Activated CD8-positive, alpha-beta memory T cell treated with anti-CD3 and anti-CD28 coated beads, Interleukin-2, amount 10 ng/mL, durations not matched to agents 7 days and 5 days (primary cell): ENCODE measurements at regions of chr17 and their contacts with region 1.

Region 1: GRCh38 chr17:1716076-1716995 is 6.2 kb upstream of the TLCD2 start:
- DNase-seq: peak; percentile 100
- ATAC-seq: peak; percentile 85
- H3K4me3 Mint-ChIP-seq: peak overlapping the region; percentile 89
- H3K27ac Mint-ChIP-seq: peak overlapping the region; percentile 99
- H3K4me1 Mint-ChIP-seq: peaks cover 23% of the 10 kb centered on the region
- H3K27me3 Mint-ChIP-seq: peaks cover 7% of the 10 kb centered on the region

Region 2: GRCh38 chr17:1566545-1567199 is 149.7 kb before region 1 on chr17:
- CTCF ChIA-PET with region 1: no interaction called
- DNase-seq: peak; percentile 50
- ATAC-seq: no peak
- H3K4me3 Mint-ChIP-seq: peak overlapping the region; percentile 72
- H3K27ac Mint-ChIP-seq: peak overlapping the region; percentile 86
- H3K4me1 Mint-ChIP-seq: peaks cover 26% of the 10 kb centered on the region
- H3K27me3 Mint-ChIP-seq: no peaks in the 10 kb centered on the region

Region 3: DNA sequence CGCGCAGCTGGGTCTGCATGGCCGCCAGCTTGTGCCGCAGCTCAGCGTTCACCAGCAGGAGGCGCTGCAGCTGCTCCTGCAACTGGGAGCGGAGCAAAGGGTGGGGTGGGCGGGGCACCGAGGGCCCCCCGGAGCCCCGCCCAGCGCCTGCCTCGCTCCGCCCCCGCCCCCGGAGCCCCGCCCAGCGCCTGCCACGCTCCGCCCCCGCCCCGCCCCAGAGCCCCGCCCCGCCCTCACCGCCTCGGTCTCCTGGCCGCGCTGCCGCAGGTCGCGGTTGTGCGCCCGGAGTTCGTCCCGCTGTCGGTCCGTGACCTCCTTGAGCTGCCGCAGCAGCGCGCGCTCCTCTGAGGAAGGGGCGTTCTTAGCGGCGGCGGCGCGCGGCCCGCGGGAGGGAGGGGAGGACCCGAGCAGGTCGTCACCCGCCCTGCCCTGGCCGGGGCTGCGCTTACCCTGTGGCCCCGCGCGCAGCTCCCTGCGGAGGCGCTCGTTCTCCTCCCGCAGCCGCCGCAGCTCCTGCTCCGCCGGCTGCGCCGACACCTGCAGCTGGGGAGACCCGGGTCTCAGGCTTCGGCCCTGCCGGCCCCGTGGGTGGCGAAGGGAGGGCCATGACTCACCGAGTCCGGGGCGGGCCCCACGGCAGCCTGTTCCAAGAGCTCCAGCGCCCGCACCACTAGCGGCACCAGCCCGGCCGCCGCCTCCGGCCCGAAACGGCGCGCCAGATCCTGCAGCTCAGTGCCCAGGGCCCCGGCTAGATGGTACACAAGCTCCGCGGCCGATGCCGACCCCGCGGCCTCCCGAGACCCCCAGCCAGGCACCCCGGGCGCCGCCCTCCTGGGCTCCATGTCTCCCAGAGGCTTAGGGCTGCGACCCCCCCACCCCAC is 67.1 kb before region 1 on chr17:
- CTCF ChIA-PET with region 1: interaction called, 21 read pairs
- DNase-seq: peak; percentile 96
- ATAC-seq: peak; percentile 81
- H3K4me3 Mint-ChIP-seq: peak overlapping the region; percentile 44
- H3K27ac Mint-ChIP-seq: peak overlapping the region; percentile 28
- H3K4me1 Mint-ChIP-seq: peaks cover 19% of the 10 kb centered on the region
- H3K27me3 Mint-ChIP-seq: no peaks in the 10 kb centered on the region

Region 4: DNA sequence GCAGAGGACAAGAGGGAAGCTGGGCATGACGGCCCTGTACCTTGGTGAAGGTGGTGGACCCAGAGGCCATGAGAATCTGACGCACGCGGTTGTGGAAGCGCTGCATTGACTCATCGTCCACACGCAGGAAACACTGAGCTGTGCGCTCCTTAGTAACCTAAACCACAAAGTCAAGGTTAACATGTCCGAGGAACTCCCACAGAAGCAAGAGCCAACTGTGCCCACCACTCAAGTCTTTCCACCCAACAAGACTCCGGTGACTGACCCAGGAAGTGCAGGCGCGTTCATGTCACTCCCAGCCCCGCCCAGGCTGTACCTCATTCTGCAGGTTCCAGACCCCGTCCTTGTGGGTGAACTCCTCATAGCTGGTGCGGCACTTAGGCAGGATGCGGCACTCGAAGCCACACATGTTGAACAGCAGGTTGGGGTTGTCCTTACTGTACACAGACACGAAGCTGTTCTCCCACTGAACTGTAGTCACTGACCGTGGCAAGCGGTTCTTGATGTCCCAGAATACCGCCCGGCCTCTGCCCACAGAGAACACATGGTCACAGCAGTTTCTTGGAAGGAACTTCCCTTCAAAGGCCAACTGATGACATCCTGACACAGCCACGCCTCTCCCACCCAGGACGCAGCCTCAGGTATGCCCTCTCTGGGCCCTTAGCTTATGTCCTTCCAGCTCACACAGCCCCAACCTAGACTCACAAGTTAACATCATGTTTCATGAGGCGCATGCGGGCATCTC is 43.1 kb before region 1 on chr17:
- CTCF ChIA-PET with region 1: interaction called, 14 read pairs
- DNase-seq: peak; percentile 58
- ATAC-seq: peak; percentile 47
- H3K4me3 Mint-ChIP-seq: no peak overlapping the region
- H3K27ac Mint-ChIP-seq: peak overlapping the region; percentile 32
- H3K4me1 Mint-ChIP-seq: peaks cover 19% of the 10 kb centered on the region
- H3K27me3 Mint-ChIP-seq: no peaks in the 10 kb centered on the region

Region 5: DNA sequence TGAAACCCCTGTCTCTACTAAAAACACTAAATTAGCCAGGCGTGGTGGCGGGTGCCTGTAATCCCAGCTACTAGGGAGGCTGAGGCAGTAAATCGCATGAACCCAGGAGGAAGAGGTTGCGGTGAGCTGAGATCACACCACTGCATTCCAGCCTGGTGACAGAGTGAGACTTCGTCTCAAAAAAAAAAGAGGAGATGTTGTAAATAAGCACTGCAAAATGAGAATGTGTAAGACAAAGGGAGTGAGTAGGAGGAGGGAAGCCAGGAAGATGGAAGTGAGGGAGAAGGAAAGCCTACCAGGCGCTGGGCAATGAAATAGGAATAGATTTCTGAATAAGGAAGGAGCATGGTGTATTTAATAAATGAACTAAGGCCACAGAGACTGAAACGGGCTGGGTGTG is 23.0 kb before region 1 on chr17:
- CTCF ChIA-PET with region 1: no interaction called
- DNase-seq: no peak
- ATAC-seq: no peak
- H3K4me3 Mint-ChIP-seq: no peak overlapping the region
- H3K27ac Mint-ChIP-seq: no peak overlapping the region
- H3K4me1 Mint-ChIP-seq: no peaks in the 10 kb centered on the region
- H3K27me3 Mint-ChIP-seq: peaks cover 9% of the 10 kb centered on the region

Region 6: GRCh38 chr17:1764284-1764683 is 47.9 kb after region 1 on chr17:
- CTCF ChIA-PET with region 1: interaction called, 13 read pairs
- DNase-seq: peak; percentile 86
- ATAC-seq: peak; percentile 92
- H3K4me3 Mint-ChIP-seq: peak overlapping the region; percentile 3
- H3K27ac Mint-ChIP-seq: peak overlapping the region; percentile 79
- H3K4me1 Mint-ChIP-seq: peaks cover 27% of the 10 kb centered on the region
- H3K27me3 Mint-ChIP-seq: no peaks in the 10 kb centered on the region

Region 7: DNA sequence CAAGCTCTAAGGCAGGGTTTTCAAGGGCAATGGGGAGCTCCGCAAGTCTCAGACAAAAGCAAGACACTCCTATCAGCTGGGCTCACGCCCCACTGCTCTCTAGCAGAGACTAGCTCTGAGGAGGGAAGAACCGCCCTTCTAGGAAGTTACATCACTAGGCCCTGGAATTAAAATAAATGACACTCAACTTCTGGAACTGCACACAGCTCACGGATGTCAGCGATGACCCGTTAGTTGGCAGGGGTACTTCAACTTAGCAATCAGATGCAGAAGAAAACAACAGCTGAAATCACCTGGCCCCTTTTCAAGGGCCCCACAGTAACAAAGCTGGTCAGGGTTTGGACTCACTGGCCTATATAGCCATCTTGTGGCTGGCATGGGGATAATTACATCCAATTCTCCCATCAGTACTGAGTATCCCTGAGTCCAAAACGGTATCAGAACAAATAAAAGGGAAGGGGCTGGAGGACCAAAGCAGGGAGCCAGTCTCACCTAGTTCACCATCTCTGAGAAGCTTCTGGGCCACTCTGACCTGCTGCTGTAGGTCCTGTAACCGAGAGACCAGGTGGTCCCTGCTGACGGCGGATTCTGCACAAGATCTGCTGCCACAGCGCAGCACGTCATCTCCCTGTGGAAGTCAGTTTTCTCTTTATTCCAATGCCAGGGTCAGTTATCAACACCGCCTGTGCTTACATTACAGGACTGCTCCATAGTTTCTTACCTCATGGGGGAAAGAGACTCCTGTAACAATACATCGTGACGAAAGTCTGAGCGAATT is 67.7 kb after region 1 on chr17:
- CTCF ChIA-PET with region 1: interaction called, 10 read pairs
- DNase-seq: no peak
- ATAC-seq: no peak
- H3K4me3 Mint-ChIP-seq: no peak overlapping the region
- H3K27ac Mint-ChIP-seq: no peak overlapping the region
- H3K4me1 Mint-ChIP-seq: peaks cover 2% of the 10 kb centered on the region
- H3K27me3 Mint-ChIP-seq: no peaks in the 10 kb centered on the region

Region 8: GRCh38 chr17:1865252-1866037 is 149.1 kb after region 1 on chr17:
- CTCF ChIA-PET with region 1: interaction called, 37 read pairs
- DNase-seq: peak; percentile 61
- ATAC-seq: peak; percentile 67
- H3K4me3 Mint-ChIP-seq: no peak overlapping the region
- H3K27ac Mint-ChIP-seq: no peak overlapping the region
- H3K4me1 Mint-ChIP-seq: peaks cover 15% of the 10 kb centered on the region
- H3K27me3 Mint-ChIP-seq: no peaks in the 10 kb centered on the region

Region 9: GRCh38 chr17:1870592-1870991 is 154.3 kb after region 1 on chr17:
- CTCF ChIA-PET with region 1: interaction called, 37 read pairs
- DNase-seq: no peak
- ATAC-seq: peak; percentile 85
- H3K4me3 Mint-ChIP-seq: peak overlapping the region; percentile 49
- H3K27ac Mint-ChIP-seq: peak overlapping the region; percentile 92
- H3K4me1 Mint-ChIP-seq: peaks cover 51% of the 10 kb centered on the region
- H3K27me3 Mint-ChIP-seq: no peaks in the 10 kb centered on the region